ENCODE measurements at regions of chr1 and their contacts with region 1.

Region 1: GRCh38 chr1:34590211-34590623 is 164.6 kb upstream of the GJB5 start:
- DNase-seq: no peak
- CTCF ChIP-seq: no peak

Region 2: DNA sequence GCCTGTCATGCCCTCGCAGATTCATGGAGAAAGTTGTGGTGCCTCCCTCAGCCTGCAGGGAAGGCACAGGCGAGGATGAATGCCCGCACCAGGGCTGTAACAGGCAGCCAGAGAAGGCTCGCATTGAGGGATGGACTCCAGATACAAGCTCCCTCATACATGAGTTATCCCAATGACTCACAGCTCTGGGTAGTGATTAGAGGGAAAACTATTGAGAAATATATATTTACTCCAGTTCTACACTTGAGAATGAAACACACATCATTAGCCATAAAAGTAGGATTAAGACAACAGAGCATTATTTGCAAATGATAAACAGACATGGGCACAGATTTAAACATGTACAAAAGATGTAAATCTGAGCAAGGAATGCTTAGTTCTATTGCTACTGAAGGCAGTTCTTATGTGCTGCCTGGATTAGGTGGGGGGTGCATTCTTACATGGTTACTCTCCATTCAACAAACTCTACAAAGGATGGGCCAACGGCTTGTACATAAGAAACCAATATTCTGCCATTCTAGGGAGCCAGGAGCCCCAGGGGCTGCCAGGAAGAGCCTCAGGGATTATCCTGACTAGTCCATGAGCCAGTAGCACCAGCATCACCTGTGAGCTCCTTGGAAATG is 523.1 kb before region 1 on chr1:
- in situ Hi-C with region 1: no loop called
- DNase-seq: no peak
- CTCF ChIP-seq: no peak

Region 3: GRCh38 chr1:34460193-34460592 is 130.0 kb before region 1 on chr1:
- in situ Hi-C with region 1: loop called (anchors 5 kb)
- DNase-seq: peak; percentile 66
- CTCF ChIP-seq: peak; percentile 65

Measured in GM13976 (cell line).